ENCODE measurements at regions of chr21 and their contacts with region 1.

Region 1: DNA sequence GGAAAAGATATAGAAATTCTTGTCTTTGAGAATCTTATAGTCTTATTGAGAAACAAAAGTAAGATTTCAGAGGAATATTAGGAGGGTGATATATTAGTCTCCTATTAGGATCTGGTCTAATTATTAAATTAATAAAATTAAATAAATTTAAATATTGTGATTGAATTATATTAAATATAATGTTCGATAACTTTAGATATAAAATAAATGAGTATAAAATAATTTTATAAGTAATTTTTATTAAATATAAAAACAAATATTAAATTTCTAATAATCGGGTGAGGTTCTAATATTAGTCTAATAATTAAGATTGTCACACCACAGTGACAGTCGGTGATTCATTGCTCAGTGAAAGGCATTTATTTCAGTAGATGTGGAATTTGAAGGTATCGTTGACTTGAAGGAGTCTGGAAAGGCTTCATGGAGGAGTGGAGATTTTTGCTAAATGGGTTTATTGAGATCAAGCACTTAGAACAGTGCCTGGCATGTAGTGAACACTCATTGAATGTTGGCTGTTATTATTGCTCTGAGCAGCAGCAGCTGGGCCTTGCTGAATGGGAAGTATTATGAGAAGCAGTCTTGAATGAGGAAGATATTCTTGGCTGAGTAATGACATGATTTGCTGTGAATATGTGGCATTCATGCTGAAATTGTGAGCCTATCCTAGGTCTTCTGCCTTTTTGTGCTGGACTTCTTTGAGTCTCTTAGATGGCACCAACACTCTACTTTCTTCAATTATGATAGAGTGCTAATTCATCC is 74.6 kb downstream of the USP25 start:
- DNase-seq: no peak
- ATAC-seq: no peak
- H3K4me3 ChIP-seq: no peak overlapping the region
- H3K27ac ChIP-seq: peak overlapping the region in 3 of 4 donors; percentile 14 to 72 (median 22)
- H3K4me1 ChIP-seq: peaks cover 35 to 38% of the 10 kb centered on the region in 2 donors
- H3K27me3 ChIP-seq: no peaks in the 10 kb centered on the region
- CTCF ChIP-seq: no peak
- POLR2A ChIP-seq: no peak

Region 2: GRCh38 chr21:15768045-15768601 is 36.3 kb before region 1 on chr21:
- in situ Hi-C with region 1: no loop called
- intact Hi-C with region 1: loop called (anchors 5 kb)
- DNase-seq: no peak
- ATAC-seq: no peak
- H3K4me3 ChIP-seq: peak overlapping the region in 1 of 4 donors; percentile 9
- H3K27ac ChIP-seq: peak overlapping the region in 1 of 4 donors; percentile 23
- H3K4me1 ChIP-seq: peaks cover 92 to 96% of the 10 kb centered on the region in 2 donors
- H3K27me3 ChIP-seq: no peaks in the 10 kb centered on the region
- CTCF ChIP-seq: peak in 1 of 5 experiments; percentile 9
- POLR2A ChIP-seq: no peak